ENCODE measurements at regions of chr4 and their contacts with region 1.

Region 1: GRCh38 chr4:89024051-89024675 is 32.8 kb downstream of the FAM13A start:
- DNase-seq: peak in 3 of 5 donors; percentile 15 to 75 (median 52)
- H3K4me3 ChIP-seq: no peak overlapping the region
- H3K27ac ChIP-seq: no peak overlapping the region
- H3K4me1 ChIP-seq: no peaks in the 10 kb centered on the region
- H3K27me3 ChIP-seq: no peaks in the 10 kb centered on the region
- CTCF ChIP-seq: peak; percentile 50 to 92 (median 76)
- EP300 ChIP-seq: no peak
- POLR2A ChIP-seq: no peak

Region 2: GRCh38 chr4:88523325-88524129 is 500.6 kb before region 1 on chr4 and contains the start of gene PYURF:
- intact Hi-C with region 1: loop called in 1 of 4 experiments (anchors 5 kb)
- DNase-seq: peak; percentile 94 to 97 (median 95)
- H3K4me3 ChIP-seq: peak within 1 kb of the TSS; percentile 96
- H3K27ac ChIP-seq: peak within 1 kb of the TSS; percentile 76 to 90
- H3K4me1 ChIP-seq: peaks cover 6% of the 10 kb centered on the region
- H3K27me3 ChIP-seq: no peaks in the 10 kb centered on the region
- CTCF ChIP-seq: peak in 1 of 3 donors; percentile 11
- EP300 ChIP-seq: peak; percentile 9
- POLR2A ChIP-seq: peak; percentile 87
- total RNA-seq, gene PYURF: 72.5 to 105 (median 91.2) TPM

Region 3: GRCh38 chr4:88706574-88706973 is 317.6 kb before region 1 on chr4:
- intact Hi-C with region 1: loop called in 3 of 4 experiments (anchors 5 to 10 kb)
- DNase-seq: peak; percentile 28 to 49 (median 36)
- H3K4me3 ChIP-seq: no peak overlapping the region
- H3K27ac ChIP-seq: no peak overlapping the region
- H3K4me1 ChIP-seq: no peaks in the 10 kb centered on the region
- H3K27me3 ChIP-seq: no peaks in the 10 kb centered on the region
- CTCF ChIP-seq: peak; percentile 39 to 55 (median 47)
- EP300 ChIP-seq: no peak
- POLR2A ChIP-seq: no peak

Region 4: GRCh38 chr4:88823058-88823919 is 200.9 kb before region 1 on chr4:
- intact Hi-C with region 1: loop called in 3 of 4 experiments (anchors 2 to 10 kb)
- DNase-seq: peak; percentile 87 to 93 (median 91)
- H3K4me3 ChIP-seq: peak overlapping the region; percentile 51
- H3K27ac ChIP-seq: peak overlapping the region; percentile 11 to 91
- H3K4me1 ChIP-seq: no peaks in the 10 kb centered on the region
- H3K27me3 ChIP-seq: no peaks in the 10 kb centered on the region
- CTCF ChIP-seq: no peak
- EP300 ChIP-seq: no peak
- POLR2A ChIP-seq: peak; percentile 57